ENCODE measurements at regions of chr6 and their contacts with region 1.

Region 1: GRCh38 chr6:17987576-17988421 is at the start of gene KIF13A:
- DNase-seq: no peak
- H3K4me3 ChIP-seq: peak within 1 kb of the TSS; percentile 73
- H3K27ac ChIP-seq: peak within 1 kb of the TSS; percentile 68
- H3K27me3 ChIP-seq: no peaks in the 10 kb centered on the region
- CTCF ChIP-seq: 0 out of 2 replicates have a peak, but pooled peaks have one; percentile 8
- polyA plus RNA-seq, gene KIF13A: 56.1 and 57.7 TPM in 2 replicates

Region 2: DNA sequence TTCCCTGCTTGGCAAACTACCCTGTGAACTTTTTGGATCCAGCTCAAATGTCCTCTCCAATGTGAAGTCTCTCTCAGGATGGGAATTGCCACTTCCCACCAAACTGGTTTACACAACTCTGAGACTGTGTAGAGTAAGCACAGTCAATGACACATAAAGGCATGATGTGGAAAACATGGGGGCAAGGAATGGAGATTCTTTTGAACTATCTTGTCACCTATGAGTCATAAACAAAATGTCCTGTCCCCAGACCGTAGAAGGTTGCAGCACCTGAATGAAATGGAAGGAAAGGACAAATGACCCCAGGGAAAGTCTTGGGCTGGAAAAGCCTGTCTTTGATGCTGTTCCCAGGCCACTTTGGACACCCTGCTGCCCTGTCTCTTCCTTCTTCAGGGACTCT is 10.7 kb after region 1 on chr6:
- CTCF ChIA-PET with region 1: no interaction called
- POLR2A ChIA-PET with region 1: interaction called, 13 read pairs
- DNase-seq: no peak
- H3K4me3 ChIP-seq: no peak overlapping the region
- H3K27ac ChIP-seq: no peak overlapping the region
- H3K27me3 ChIP-seq: no peaks in the 10 kb centered on the region
- CTCF ChIP-seq: no peak